Activated CD4-positive, alpha-beta T cell treated with anti-CD3 and anti-CD28 coated beads for 36 hours (primary cell): ENCODE measurements at regions of chr4 and their contacts with region 1.

Region 1: DNA sequence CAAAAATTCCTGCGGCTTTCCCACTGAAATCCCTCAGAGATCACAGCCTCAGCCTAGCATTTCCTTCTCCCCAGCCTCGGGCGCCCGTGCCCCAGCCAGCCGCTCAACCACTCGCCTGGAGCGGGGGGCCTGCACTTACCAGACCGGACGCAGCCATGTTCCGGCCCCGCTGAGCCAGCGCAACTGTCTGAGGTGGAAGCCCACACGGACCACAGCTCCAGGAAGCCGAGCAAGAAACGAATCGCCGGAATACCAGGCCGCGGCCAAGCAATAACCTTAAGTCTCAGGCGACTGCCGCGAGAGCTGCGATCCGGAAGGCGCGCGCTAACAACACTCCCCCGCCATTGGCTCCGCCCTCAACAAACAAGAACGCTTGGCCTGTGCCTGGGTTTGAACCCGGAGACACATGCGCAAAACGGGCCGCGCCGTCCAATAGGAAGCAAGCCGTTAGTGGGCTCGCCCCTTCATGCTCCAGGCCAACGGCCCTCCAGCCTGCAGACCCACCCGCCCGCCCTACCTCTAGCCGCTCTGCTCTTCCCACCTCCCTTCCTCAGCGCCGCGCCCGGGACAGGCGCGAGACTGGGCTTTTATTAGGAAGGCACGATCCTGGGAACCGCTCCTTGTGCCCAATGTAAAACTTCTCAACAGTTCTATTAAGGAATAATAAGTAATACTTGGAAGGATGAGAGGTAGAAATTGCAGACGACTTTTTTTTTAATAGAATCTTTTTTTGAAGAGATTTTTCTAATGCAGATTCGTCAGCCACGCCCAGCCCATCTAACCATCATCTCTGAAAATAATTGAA is at the start of gene CENPC:
- DNase-seq: peak; percentile 97
- ATAC-seq: peak; percentile 98
- H3K4me3 Mint-ChIP-seq: peak within 1 kb of the TSS; percentile 92
- H3K27ac Mint-ChIP-seq: peak within 1 kb of the TSS; percentile 98
- H3K4me1 Mint-ChIP-seq: peaks cover 32% of the 10 kb centered on the region
- H3K27me3 Mint-ChIP-seq: no peaks in the 10 kb centered on the region
- total RNA-seq, gene CENPC: 30.3 to 33.1 TPM

Region 2: DNA sequence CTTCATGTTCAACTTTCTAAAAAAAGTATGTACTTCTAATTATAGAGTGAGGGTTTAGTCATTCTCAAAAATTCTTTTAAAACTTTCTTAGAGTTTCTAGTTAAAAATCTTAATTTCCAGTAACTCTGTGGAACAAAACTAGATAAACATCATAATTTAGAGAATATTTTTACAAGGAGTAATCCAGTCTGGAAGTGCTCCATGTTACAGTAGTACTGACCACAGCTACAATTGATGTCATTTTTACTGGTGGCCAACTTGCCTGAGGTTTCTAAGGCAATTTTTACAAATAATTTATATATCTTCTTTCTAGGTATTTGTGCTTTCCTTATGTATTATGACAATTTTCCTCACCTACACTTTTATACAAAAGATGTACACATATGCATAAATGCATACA is 490.5 kb before region 1 on chr4:
- CTCF ChIA-PET with region 1: no interaction called
- POLR2A ChIA-PET with region 1: no interaction called
- intact Hi-C with region 1: no loop called
- DNase-seq: no peak
- ATAC-seq: no peak
- H3K4me3 Mint-ChIP-seq: no peak overlapping the region
- H3K27ac Mint-ChIP-seq: no peak overlapping the region
- H3K4me1 Mint-ChIP-seq: no peaks in the 10 kb centered on the region
- H3K27me3 Mint-ChIP-seq: no peaks in the 10 kb centered on the region

Region 3: GRCh38 chr4:67535280-67535840 is 10.0 kb before region 1 on chr4:
- CTCF ChIA-PET with region 1: interaction called, 3 read pairs
- POLR2A ChIA-PET with region 1: interaction called, 3 read pairs
- intact Hi-C with region 1: loop called in 1 of 2 experiments (anchors 1 kb)
- DNase-seq: no peak
- ATAC-seq: peak; percentile 64
- H3K4me3 Mint-ChIP-seq: no peak overlapping the region
- H3K27ac Mint-ChIP-seq: peak overlapping the region; percentile 31
- H3K4me1 Mint-ChIP-seq: peaks cover 30% of the 10 kb centered on the region
- H3K27me3 Mint-ChIP-seq: no peaks in the 10 kb centered on the region

Region 4: DNA sequence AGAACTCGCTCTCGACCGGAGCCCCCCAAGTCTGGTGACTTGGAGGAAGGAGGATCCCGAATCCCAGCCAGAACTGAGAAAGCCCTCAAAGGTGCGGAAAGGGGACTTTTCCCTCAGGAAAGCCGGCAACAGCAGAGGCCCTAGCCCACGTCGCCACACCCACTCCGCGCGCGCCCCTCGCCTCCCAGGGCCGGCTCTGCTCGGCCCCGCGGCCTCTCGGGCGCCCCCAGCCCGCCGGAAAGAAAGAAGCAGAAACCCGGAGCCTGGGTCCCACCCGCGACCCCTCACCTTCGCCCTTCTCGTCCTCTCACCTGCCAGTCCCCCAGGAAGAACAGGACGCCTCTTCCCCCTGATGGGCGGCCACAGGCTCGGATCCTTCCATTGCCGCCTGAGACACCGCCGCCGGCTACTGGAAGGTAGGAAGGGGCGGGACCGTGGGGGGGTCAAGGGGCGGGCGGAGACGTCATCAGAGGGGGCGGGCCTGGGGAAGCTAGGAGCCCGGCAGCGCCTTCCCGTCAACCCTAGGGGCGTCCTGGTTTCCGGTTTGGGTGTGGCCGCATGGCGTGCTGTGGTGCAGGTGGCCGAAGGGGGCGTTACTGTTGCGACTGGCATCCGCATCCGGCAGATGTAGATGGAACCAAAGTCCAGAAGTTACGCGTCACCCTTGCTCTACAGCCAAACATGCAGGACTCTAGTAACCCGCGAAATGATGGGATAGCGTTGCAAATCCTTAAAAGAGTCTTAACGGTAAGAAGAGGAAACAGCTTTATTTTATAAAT is 155.5 kb after region 1 on chr4 and contains the start of gene UBA6:
- CTCF ChIA-PET with region 1: interaction called, 9 read pairs
- POLR2A ChIA-PET with region 1: interaction called, 3 read pairs
- intact Hi-C with region 1: loop called (anchors 1 kb)
- DNase-seq: peak; percentile 98
- ATAC-seq: peak; percentile 98
- H3K4me3 Mint-ChIP-seq: peak within 1 kb of the TSS; percentile 87
- H3K27ac Mint-ChIP-seq: peak within 1 kb of the TSS; percentile 94
- H3K4me1 Mint-ChIP-seq: peaks cover 54% of the 10 kb centered on the region
- H3K27me3 Mint-ChIP-seq: no peaks in the 10 kb centered on the region
- total RNA-seq, gene UBA6: 88.3 to 97.3 TPM

Region 5: DNA sequence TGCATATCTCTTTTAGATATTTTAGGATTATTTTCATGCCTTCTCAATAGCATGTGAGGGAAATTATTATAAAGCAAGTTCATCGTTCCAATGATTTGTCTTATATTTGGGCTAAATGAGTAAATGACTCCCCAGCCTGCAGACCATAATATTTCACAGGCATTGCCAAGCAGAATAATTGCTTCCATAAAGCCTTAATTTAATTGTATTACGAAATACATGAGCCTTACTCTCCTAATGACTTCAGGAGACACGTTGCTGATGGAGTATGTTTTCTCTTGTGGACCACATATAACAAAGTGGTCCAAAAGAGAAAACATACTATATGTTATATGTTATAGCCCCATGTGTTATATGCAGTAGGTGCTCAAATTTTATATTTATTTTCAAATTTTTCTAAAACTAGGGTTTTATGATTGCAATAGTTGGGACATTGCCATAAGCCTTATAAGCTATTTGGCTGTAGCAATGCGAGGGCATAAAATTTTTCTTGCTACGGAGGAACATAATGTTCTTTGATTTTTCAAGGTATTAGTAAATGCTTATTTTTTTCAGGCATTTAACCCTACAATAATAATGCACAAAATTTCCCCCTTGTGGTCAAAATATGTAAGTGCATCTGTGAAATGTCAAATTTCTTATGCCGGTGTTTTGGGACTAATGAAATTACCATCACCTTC is 364.6 kb after region 1 on chr4:
- CTCF ChIA-PET with region 1: interaction called, 3 read pairs
- POLR2A ChIA-PET with region 1: no interaction called
- intact Hi-C with region 1: loop called (anchors 1 to 2 kb)
- DNase-seq: no peak
- ATAC-seq: no peak
- H3K4me3 Mint-ChIP-seq: no peak overlapping the region
- H3K27ac Mint-ChIP-seq: no peak overlapping the region
- H3K4me1 Mint-ChIP-seq: no peaks in the 10 kb centered on the region
- H3K27me3 Mint-ChIP-seq: peaks cover 9% of the 10 kb centered on the region

Region 6: DNA sequence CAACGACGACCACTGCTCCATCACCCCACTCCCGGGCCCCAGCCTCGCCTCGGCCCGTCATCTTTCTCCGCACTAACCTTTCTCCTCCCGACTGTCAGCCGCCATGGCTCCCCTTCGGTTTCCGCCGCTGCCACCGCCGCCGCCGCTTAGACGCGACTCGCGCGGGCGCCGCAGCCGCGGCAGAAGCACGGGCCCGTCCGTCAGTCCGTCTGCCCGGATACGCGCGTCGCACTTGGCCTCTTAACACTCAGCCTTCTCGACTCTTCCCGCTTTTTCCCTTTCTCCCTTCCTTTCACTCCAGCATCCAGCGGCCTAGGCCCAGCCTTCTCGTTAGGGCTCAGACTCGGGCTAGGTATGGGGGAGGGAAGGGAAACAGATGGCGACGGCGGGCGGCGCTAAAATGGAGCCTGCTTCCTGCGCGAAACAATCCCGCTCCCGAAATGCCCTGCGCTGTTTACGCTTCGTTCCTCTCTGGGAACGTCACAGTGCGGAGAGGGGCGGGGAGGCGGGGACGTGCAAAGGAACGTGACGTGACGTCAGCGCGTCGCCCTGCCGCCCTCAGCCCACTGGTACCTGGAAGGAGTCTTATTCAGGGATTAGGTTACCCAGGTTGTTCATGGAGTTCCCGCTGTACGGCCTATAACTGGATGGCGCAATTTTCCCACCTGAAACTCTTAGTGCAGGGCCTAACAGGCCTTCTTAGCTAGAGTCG is 804.4 kb after region 1 on chr4 and contains the start of gene YTHDC1:
- CTCF ChIA-PET with region 1: no interaction called
- POLR2A ChIA-PET with region 1: no interaction called
- intact Hi-C with region 1: loop called (anchors 5 to 10 kb)
- DNase-seq: peak; percentile 98
- ATAC-seq: peak; percentile 96
- H3K4me3 Mint-ChIP-seq: peak within 1 kb of the TSS; percentile 87
- H3K27ac Mint-ChIP-seq: peak within 1 kb of the TSS; percentile 98
- H3K4me1 Mint-ChIP-seq: peaks cover 26% of the 10 kb centered on the region
- H3K27me3 Mint-ChIP-seq: no peaks in the 10 kb centered on the region
- total RNA-seq, gene YTHDC1: 78.5 to 83.0 TPM